RWPE1 (cell line): ENCODE measurements at regions of chr6 and their contacts with region 1.

Region 1: DNA sequence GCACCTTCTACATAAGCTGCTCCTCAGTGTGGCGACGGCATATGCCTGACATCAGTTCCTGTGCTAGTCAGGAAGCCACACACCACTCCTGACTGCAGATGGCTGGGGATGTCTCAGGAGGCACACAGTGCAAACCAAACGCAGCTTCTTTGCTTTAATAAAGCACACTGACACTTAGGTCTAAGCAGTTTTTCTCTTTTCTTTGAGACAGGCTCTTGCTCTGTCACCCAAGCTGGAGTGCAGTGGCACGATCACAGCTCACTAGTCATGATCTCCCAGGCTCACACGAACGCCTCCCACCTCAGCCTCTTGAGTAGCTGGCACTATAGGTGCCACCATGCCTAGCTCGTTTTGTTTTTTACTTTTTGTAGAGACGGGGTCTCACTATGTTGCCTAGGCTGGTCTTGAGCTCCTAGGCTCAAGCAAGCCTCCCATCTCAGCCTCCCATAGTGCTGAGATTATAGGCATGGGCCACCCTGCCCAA is 29.7 kb downstream of the EZR start:
- DNase-seq: no peak
- H3K27ac ChIP-seq: peak overlapping the region; percentile 46
- CTCF ChIP-seq: no peak

Region 2: DNA sequence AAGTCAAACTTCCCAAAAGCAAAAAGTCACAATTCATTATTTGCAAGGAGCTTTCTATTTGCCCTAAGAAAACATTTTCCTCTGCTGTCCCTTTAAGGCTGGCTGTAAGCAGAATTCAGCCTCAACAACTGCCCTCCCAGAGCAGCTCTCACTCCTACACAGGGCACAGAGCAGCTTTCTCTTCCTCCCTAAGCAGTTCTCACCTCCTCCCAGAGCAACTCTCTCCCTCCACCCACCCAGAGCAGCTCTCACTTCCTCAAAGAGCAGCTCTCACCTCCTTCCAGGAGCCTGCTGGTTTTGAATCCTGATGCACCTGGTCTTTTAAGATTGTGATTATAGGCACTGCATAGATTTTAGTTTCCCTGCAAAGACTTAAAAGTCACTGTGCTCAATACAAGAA is 350.2 kb before region 1 on chr6:
- CTCF ChIA-PET with region 1: no interaction called
- POLR2A ChIA-PET with region 1: no interaction called
- DNase-seq: no peak
- H3K27ac ChIP-seq: no peak overlapping the region
- CTCF ChIP-seq: no peak

Region 3: DNA sequence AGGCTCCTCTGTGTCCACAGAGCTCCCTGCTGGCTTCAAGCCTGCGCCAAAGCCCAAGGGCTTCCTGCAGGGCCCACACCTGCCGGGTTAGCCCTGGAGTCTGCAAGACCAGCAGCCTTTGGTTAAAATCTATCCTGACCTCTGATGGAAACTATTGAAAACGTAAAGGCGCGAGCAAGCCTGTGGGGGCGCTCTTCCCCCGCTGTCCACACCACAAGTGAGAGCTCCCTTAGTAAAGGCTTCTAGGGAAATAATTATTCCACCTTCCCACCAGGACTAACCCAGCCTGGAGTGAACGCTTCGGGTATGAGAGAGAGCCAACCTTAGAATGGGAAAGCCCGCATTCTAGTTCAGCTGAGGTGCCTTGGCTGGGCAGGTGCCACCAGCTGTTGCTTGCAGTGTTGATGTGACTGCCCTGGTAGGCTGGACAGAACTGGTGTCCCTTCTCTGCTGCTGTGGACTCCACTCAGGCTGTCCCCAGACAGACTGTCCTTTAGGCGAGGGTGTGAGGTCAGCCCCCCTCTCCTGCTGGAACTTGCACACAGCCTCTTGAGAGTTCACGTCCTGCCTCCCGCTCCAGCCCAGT is 70.9 kb before region 1 on chr6:
- CTCF ChIA-PET with region 1: no interaction called
- POLR2A ChIA-PET with region 1: interaction called, 11 read pairs
- DNase-seq: no peak
- H3K27ac ChIP-seq: no peak overlapping the region
- CTCF ChIP-seq: no peak

Region 4: DNA sequence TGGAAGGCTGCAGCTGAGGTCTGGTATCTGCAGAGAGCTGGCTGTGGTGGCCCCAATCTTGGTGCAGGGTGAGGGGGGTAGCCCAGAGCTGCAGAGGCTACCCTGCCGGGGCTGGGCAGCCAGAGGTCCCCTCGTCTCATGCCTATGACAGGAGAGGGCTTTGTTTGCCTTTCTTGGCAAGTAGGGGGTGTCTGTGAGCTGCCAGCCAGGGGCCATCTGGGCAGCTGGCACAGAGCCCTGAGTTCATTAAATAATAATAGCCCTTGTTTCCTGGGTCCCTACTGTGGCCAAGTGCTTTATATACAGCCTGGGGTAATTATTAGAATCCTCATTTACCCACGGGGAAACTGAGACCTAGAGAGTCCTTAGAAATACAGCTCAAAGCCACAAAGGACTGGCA is 36.9 kb before region 1 on chr6:
- CTCF ChIA-PET with region 1: no interaction called
- POLR2A ChIA-PET with region 1: no interaction called
- DNase-seq: no peak
- H3K27ac ChIP-seq: no peak overlapping the region
- CTCF ChIP-seq: no peak

Region 5: DNA sequence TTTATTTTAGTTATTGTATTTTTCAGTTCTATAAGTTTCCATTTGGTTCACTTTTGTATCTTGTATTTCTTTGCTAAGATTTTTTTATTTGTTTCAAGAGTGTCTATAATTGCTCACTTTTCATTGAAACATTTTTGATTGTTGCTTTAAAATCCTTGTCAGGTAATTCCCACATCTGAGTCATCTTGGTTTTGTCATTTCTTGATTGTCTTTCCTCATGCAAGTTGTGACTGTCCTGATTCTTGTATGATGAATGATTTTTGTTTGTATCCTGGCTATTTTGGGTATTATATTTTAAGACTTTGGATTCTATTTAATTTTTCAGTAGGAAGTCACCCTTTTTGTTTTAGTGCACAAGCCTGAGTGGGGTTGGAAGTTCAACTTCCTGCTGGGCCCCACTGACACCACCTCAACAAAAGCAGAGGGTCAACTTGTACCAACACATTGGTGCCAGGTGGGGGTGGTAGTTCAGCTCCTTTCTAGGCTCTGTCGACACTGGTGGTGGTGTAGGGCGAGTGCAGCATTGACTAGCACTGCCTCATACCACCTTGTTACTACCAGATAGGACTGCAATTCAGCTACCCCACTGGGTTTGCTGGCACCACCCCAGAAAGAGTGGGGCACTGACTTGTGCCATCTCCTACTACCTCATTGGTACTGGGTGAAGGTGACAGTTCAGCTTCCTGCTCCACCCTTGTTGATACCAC is 201.7 kb after region 1 on chr6:
- CTCF ChIA-PET with region 1: interaction called, 10 read pairs
- POLR2A ChIA-PET with region 1: no interaction called
- DNase-seq: no peak
- H3K27ac ChIP-seq: no peak overlapping the region
- CTCF ChIP-seq: no peak